ENCODE measurements at regions of chr9 and their contacts with region 1.

Region 1: DNA sequence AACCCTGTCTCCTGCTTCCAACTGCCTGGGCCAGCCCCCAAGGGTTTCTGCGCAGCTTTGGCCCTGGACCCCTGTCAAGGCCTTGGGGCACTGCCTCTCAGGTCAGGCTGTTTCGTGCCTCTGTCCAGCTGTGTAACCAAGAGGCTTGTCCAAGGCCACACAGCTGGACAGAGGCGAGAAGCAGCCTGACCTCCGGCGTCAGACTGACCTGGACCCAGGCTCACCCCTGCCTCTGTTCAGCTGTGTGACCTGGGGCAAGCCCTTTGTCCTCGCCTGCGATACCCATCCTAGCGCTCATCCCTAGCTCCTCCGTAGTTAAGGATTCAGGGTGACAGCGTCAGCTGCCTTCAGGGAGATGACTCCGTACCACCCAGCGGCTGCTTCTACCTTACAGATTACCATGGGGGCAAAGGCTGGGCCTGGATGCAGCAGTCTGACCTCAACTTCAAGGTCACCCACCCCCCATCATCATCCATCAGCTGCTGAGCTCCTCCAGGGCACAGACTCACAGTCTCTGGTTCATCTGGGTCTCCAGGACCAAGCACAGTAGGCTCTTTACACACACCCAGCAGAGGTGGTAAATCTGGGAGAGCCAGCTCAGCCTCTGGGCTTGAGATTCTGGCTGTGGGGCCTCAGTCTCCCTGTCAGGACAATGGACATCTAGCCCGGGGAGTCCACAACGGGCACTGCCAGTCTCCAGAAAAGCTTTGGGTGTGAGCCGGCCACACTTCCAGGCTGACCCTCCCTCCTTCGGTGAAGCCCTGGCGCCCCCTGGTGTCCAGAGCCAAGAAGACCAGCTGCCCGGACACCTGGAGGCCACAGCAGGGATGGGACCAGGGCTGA is 7.9 kb downstream of the AK1 start:
- DNase-seq: peak; percentile 87
- ATAC-seq: peak; percentile 87
- H3K4me3 Mint-ChIP-seq: no peak overlapping the region
- H3K27ac Mint-ChIP-seq: no peak overlapping the region
- H3K4me1 Mint-ChIP-seq: peaks cover 14% of the 10 kb centered on the region
- H3K27me3 Mint-ChIP-seq: no peaks in the 10 kb centered on the region
- CTCF ChIP-seq: peak; percentile 96

Region 2: DNA sequence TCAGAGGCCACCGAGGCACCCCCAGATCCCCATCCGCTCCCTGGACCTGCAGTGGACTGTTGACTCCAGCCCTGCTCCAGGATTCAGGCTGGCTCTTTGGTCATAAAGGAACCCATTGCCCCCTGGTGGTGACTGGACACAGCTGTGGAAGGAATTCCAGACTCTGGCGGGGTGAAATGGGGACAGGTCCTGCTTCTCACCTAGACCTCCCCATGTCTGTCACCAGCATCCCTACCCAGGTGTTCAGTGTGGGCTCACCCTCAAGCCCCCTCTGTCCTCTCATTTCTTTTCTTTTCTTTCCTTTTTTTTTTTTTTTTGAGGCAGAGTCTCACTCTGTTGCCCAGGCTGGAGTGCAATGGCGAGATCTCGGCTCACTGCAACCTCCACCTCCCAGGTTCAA is 283.0 kb before region 1 on chr9:
- CTCF ChIA-PET with region 1: interaction called, 13 read pairs
- POLR2A ChIA-PET with region 1: no interaction called
- intact Hi-C with region 1: no loop called
- DNase-seq: peak; percentile 77
- ATAC-seq: peak; percentile 76
- H3K4me3 Mint-ChIP-seq: no peak overlapping the region
- H3K27ac Mint-ChIP-seq: no peak overlapping the region
- H3K4me1 Mint-ChIP-seq: peaks cover 6% of the 10 kb centered on the region
- H3K27me3 Mint-ChIP-seq: peaks cover 9% of the 10 kb centered on the region
- CTCF ChIP-seq: peak; percentile 80

Region 3: GRCh38 chr9:127785023-127785932 is 84.3 kb before region 1 on chr9:
- CTCF ChIA-PET with region 1: interaction called, 20 read pairs
- POLR2A ChIA-PET with region 1: interaction called, 4 read pairs
- intact Hi-C with region 1: no loop called
- DNase-seq: peak; percentile 90
- ATAC-seq: peak; percentile 37
- H3K4me3 Mint-ChIP-seq: peak overlapping the region; percentile 97
- H3K27ac Mint-ChIP-seq: peak overlapping the region; percentile 95
- H3K4me1 Mint-ChIP-seq: peaks cover 72% of the 10 kb centered on the region
- H3K27me3 Mint-ChIP-seq: no peaks in the 10 kb centered on the region
- CTCF ChIP-seq: peak; percentile 86

Region 4: DNA sequence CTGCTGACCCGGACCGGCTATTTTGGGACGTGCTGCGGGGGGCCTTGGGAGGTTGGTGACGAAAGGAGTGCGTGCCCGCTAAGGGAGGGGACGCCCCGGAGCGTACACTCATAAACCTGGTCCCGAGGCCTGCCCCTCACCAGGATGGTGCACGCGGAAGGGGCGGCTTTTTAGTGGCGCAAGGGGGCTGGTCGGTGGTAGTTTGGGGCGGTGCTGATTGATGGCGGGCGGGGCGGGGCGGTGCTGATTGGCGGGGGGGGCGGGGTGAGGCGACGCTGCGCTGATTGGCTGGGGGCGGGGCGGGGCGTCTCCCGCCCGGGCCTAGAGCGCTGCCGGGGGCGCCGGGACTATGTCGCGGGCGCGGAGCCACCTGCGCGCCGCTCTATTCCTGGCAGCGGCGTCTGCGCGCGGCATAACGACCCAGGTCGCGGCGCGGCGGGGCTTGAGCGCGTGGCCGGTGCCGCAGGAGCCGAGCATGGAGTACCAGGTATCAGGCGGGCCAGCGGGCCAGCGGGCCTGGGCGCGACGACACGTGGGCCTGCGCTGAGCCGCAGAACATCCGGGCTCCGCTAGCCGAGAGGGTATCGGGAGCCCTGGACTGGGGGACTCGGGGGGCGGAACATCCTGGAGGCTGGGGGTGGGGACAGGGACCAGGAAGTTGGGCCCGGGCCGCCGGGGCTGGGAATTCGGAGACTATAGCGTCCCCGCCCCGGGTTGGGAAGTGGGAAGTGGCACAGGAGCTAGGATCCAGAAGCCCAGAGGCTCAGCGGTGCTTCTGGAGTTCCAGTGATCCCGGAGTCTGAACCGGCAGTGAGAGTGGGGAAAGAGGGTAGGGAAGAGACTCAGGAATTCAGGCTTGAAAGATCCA is 66.7 kb before region 1 on chr9 and contains the start of gene FPGS:
- CTCF ChIA-PET with region 1: interaction called, 17 read pairs
- POLR2A ChIA-PET with region 1: interaction called, 3 read pairs
- intact Hi-C with region 1: loop called (anchors 5 kb)
- DNase-seq: peak; percentile 92
- ATAC-seq: peak; percentile 87
- H3K4me3 Mint-ChIP-seq: peak within 1 kb of the TSS; percentile 99
- H3K27ac Mint-ChIP-seq: peak within 1 kb of the TSS; percentile 97
- H3K4me1 Mint-ChIP-seq: peaks cover 26% of the 10 kb centered on the region
- H3K27me3 Mint-ChIP-seq: no peaks in the 10 kb centered on the region
- CTCF ChIP-seq: no peak
- total RNA-seq, gene FPGS: 79.8 to 80.4 TPM

Region 5: GRCh38 chr9:127884427-127884911 is 14.9 kb after region 1 on chr9:
- CTCF ChIA-PET with region 1: interaction called, 33 read pairs
- POLR2A ChIA-PET with region 1: interaction called, 5 read pairs
- intact Hi-C with region 1: no loop called
- DNase-seq: no peak
- ATAC-seq: no peak
- H3K4me3 Mint-ChIP-seq: no peak overlapping the region
- H3K27ac Mint-ChIP-seq: no peak overlapping the region
- H3K4me1 Mint-ChIP-seq: peaks cover 5% of the 10 kb centered on the region
- H3K27me3 Mint-ChIP-seq: no peaks in the 10 kb centered on the region
- CTCF ChIP-seq: no peak

Region 6: DNA sequence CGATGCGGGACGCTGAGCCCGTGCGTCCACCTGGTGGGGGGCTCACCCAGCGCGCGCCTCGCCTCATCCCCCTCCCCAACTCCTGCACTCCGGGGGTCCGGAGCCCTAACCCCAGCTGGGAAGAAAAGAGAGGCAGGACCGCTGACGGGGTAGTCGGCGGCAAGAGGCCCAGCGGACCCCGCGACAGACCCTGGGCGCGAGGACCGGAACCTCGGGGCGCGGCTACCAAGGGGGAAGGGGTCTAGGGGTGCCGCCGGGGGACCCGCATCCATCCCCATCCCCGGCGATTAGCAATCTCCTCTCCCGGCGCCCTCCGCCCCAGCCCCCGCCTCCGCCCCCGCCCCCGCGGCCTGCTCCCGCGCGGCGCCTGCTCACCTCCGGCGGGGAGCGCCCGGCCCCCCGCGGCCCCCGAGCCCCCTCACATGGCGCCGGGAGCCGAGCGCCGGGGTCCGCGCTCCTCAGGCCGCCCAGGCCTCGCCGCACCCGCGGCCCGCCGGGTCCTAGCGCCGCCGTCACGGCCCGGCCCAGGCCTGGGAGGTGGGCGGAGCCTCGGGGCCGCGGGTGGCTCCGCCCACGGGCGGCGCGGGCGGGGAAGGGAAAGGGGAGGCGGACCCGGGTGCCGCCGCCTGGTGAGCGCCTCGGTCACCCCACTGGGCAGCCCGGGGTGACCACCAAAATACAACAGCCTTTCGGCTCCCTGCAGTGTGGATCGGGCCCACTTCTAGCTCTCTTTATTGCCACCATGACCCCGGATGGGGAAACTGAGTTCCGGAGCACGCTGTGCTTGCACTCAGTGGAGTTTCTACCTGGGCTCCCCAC is 29.8 kb after region 1 on chr9 and contains the start of gene ST6GALNAC6:
- CTCF ChIA-PET with region 1: interaction called, 16 read pairs
- POLR2A ChIA-PET with region 1: interaction called, 4 read pairs
- intact Hi-C with region 1: no loop called
- DNase-seq: peak; percentile 76
- ATAC-seq: peak; percentile 78
- H3K4me3 Mint-ChIP-seq: peak within 1 kb of the TSS; percentile 82
- H3K27ac Mint-ChIP-seq: peak within 1 kb of the TSS; percentile 83
- H3K4me1 Mint-ChIP-seq: peaks cover 37% of the 10 kb centered on the region
- H3K27me3 Mint-ChIP-seq: no peaks in the 10 kb centered on the region
- CTCF ChIP-seq: no peak
- total RNA-seq, gene ST6GALNAC6: 36.9 to 38.8 TPM

Region 7: GRCh38 chr9:128042043-128042442 is 172.5 kb after region 1 on chr9:
- CTCF ChIA-PET with region 1: no interaction called
- POLR2A ChIA-PET with region 1: no interaction called
- intact Hi-C with region 1: no loop called
- DNase-seq: no peak
- ATAC-seq: no peak
- H3K4me3 Mint-ChIP-seq: no peak overlapping the region
- H3K27ac Mint-ChIP-seq: no peak overlapping the region
- H3K4me1 Mint-ChIP-seq: peaks cover 7% of the 10 kb centered on the region
- H3K27me3 Mint-ChIP-seq: no peaks in the 10 kb centered on the region
- CTCF ChIP-seq: no peak

Measured in activated CD8-positive, alpha-beta T cell treated with anti-CD3 and anti-CD28 coated beads for 36 hours (primary cell).